ENCODE measurements at regions of chr4 and their contacts with region 1.

Region 1: DNA sequence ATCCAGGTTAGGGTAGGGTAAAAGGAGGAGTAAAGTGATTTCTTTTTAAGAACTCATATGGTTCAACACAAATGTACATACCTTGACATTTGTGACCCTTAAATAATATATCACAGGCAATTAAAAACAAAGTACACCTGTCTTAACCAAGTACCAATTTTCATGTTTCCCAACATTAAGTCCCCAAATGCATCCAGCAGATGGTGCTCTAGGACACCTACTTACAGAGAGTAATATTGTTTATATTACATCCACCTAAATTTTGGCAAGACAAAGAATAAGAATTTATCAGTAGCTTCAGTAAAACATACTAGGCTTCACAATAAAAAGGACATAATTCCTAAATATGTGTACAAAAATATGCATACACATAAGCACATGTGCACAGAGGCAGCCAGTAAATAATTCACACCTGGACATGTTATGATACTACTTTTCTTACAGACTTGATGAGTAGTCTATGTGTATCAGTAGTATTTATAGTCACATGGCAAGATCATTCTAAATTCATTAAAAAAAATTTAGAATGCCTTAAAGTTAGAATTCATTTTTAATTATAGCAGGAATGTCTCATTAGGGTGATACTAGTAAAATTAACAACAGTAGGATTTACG is 219.7 kb downstream of the DCLK2 start:
- DNase-seq: peak; percentile 78
- ATAC-seq: peak; percentile 66
- H3K4me3 ChIP-seq: no peak overlapping the region
- H3K27ac ChIP-seq: no peak overlapping the region
- H3K4me1 ChIP-seq: no peaks in the 10 kb centered on the region
- H3K27me3 ChIP-seq: no peaks in the 10 kb centered on the region
- CTCF ChIP-seq: peak; percentile 81
- POLR2A ChIP-seq: no peak
- RAD21 ChIP-seq: peak; percentile 88

Region 2: GRCh38 chr4:150867148-150867547 is 569.2 kb after region 1 on chr4:
- CTCF ChIA-PET with region 1: interaction called, 13 read pairs
- POLR2A ChIA-PET with region 1: no interaction called
- dilution Hi-C with region 1: no loop called
- in situ Hi-C with region 1: loop called (anchors 5 kb)
- intact Hi-C with region 1: loop called (anchors 1 kb)
- DNase-seq: peak; percentile 81
- ATAC-seq: peak; percentile 72
- H3K4me3 ChIP-seq: no peak overlapping the region
- H3K27ac ChIP-seq: no peak overlapping the region
- H3K4me1 ChIP-seq: no peaks in the 10 kb centered on the region
- H3K27me3 ChIP-seq: no peaks in the 10 kb centered on the region
- CTCF ChIP-seq: peak; percentile 76
- POLR2A ChIP-seq: no peak
- RAD21 ChIP-seq: peak; percentile 77